CD8-positive, alpha-beta memory T cell (primary cell): ENCODE measurements at regions of chr12 and their contacts with region 1.

Region 1: DNA sequence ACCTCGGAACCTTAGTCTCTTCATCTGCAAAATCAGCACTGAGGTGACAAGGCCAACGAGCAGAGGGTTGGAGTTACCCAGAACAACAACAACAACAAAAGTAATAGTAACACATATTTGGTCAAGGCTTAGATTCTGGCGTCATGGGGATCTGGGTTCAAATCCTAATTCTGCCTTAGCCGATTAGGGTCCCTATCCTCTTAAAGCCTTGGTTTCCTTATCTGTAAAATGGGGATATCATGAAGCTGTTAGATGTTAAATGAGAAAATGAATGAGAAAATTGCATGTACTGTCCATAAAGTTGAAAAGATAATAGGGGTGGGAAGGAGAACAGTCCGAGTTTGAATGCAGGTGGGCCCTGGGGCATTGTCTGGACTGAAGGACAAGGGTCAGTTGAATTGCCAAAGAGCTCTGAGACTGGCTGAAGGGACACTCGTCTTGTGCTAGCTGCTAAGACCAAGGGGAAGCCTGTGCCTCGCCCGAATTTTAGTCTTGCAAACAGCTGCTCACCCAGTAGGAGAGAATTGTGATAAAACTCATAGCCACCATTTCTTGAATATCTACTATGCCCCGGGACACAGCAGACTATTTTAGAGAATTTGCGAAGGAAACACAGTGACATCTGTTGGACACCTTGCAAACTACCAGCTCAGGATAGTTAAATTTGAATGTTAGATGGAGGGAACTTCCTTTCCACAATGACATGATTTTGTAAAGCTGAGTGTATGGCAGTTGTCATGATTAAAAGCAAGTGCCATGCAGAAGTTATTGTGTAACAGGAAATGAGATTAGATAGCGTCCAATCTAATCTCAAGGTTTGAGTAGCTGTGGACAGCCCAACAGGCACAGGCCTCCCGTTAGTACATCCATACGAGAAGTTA is 6.8 kb upstream of the HNF1A start:
- DNase-seq: peak in 2 of 5 donors; percentile 48 to 66
- H3K4me3 ChIP-seq: no peak overlapping the region
- H3K4me3 Mint-ChIP-seq: no peak overlapping the region
- H3K27ac ChIP-seq: no peak overlapping the region
- H3K27ac Mint-ChIP-seq: peak overlapping the region in 1 of 8 donors; percentile 20
- H3K4me1 ChIP-seq: no peaks in the 10 kb centered on the region
- H3K4me1 Mint-ChIP-seq: peaks cover 0 to 4% (median 2%) of the 10 kb centered on the region in 3 donors
- H3K27me3 ChIP-seq: no peaks in the 10 kb centered on the region
- H3K27me3 Mint-ChIP-seq: no peaks in the 10 kb centered on the region

Region 2: DNA sequence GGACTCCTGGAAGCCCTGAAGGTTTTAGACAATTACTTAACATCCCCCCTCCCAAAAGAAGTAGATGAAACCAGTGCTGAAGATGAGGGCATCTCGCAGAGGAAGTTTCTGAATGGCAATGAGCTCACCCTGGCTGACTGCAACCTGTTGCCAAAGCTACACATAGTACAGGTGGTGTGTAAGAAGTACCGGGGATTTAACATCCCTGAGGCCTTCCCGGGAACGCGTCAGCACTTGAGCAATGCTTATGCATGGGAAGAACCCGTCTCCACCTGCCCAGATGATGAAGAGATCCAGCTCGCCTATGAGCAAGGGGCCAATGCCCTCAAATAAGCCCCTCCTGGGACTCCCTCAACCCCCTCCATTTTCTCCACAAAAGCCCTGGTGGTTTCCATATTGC is 56.7 kb before region 1 on chr12:
- CTCF ChIA-PET with region 1: no interaction called
- POLR2A ChIA-PET with region 1: no interaction called
- DNase-seq: no peak
- H3K4me3 ChIP-seq: no peak overlapping the region
- H3K4me3 Mint-ChIP-seq: no peak overlapping the region
- H3K27ac ChIP-seq: no peak overlapping the region
- H3K27ac Mint-ChIP-seq: no peak overlapping the region
- H3K4me1 ChIP-seq: no peaks in the 10 kb centered on the region
- H3K4me1 Mint-ChIP-seq: no peaks in the 10 kb centered on the region
- H3K27me3 ChIP-seq: no peaks in the 10 kb centered on the region
- H3K27me3 Mint-ChIP-seq: peaks cover 4 to 6% of the 10 kb centered on the region in 2 donors

Region 3: GRCh38 chr12:120950807-120951206 is 20.7 kb before region 1 on chr12:
- CTCF ChIA-PET with region 1: interaction called, 10 read pairs
- POLR2A ChIA-PET with region 1: no interaction called
- DNase-seq: no peak
- H3K4me3 ChIP-seq: no peak overlapping the region
- H3K4me3 Mint-ChIP-seq: no peak overlapping the region
- H3K27ac ChIP-seq: no peak overlapping the region
- H3K27ac Mint-ChIP-seq: no peak overlapping the region
- H3K4me1 ChIP-seq: no peaks in the 10 kb centered on the region
- H3K4me1 Mint-ChIP-seq: no peaks in the 10 kb centered on the region
- H3K27me3 ChIP-seq: no peaks in the 10 kb centered on the region
- H3K27me3 Mint-ChIP-seq: peaks cover 0 to 6% of the 10 kb centered on the region in 2 donors